BJ (cell line): ENCODE measurements at regions of chr2 and their contacts with region 1.

Region 1: DNA sequence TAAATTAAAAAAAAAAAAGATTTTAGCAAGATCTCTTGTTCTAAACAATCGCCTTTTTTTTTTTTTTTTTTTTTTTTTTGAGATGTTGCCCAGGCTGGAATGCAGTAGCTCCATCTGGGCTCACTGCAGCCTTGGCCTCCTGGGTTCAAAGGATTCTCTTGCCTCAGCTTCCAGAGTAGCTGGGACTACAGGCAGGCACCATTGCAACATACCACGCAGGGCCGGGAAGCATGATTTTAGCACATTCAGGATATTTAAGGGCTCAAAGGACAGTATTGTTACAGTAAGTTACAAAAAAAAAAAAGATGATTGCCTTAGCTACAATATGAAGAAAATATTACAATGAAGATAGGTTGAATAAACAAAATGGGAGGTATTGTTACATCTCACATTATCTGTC is 29.5 kb upstream of the SAP130 start:
- DNase-seq: no peak
- H3K4me3 ChIP-seq: no peak overlapping the region
- H3K27me3 ChIP-seq: no peaks in the 10 kb centered on the region
- CTCF ChIP-seq: no peak

Region 2: DNA sequence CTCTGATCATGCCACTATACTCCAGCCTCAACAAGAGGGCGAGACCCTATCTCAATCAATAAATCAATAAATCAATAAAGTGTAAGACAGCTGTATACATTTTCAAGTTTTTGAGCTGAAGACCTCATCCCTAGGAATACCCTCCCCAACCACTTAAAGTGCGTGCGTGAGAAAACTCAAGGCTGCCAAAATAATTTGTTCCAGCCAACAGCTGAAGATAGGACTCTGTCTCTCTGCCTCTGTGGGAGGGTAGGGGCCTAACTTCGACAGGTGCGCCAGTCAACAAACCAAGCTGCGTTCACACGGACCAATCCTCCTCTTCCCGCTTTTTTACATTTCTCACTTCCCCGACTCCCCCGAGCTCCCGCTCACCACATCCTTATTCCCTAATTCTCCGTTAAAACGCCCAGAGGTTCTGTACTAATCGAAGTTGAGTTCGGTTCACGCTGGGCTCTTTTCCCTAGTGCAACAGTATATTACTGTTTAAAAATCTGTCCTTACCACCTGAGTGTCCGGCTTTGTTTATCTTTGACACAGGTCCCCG is 200.0 kb before region 1 on chr2:
- CTCF ChIA-PET with region 1: no interaction called
- POLR2A ChIA-PET with region 1: no interaction called
- DNase-seq: no peak
- H3K4me3 ChIP-seq: peak overlapping the region; percentile 92
- H3K27me3 ChIP-seq: no peaks in the 10 kb centered on the region
- CTCF ChIP-seq: no peak

Region 3: DNA sequence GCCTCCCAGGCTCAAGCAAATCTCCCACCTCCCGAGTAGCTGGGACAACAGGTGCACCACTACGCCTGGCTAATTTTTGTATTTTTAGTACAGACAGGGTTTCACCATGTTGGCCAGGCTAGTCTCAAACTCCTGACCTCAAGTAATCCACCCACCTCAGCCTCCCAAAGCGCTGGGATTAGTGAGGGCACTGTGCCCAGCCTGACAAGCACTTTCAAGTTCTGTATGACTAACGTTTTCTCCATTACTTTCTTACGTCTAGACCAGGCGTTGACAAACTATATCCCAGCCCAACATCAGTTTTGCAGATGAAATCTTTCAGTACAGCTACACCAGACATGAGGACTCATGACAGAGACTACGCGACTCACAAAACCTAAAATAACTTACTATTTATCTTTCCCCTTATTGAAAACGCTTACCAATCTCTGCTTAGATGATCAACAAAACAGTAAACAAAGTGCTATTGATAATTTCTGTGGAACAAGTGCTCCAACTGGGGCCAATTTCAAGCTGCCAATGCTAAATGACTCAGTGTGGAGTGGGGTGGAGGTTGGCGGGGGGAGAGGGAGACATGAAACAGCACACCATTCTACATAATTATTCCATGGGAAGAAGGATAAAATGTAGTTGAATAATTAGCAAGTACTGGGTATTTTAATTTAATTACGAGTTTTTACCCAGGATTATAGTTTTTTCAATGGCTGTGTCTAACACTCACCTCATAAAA is 88.6 kb before region 1 on chr2:
- CTCF ChIA-PET with region 1: no interaction called
- POLR2A ChIA-PET with region 1: no interaction called
- DNase-seq: no peak
- H3K4me3 ChIP-seq: no peak overlapping the region
- H3K27me3 ChIP-seq: no peaks in the 10 kb centered on the region
- CTCF ChIP-seq: no peak

Region 4: GRCh38 chr2:128041561-128041960 is 15.8 kb before region 1 on chr2:
- CTCF ChIA-PET with region 1: no interaction called
- POLR2A ChIA-PET with region 1: interaction called, 10 read pairs
- DNase-seq: no peak
- H3K4me3 ChIP-seq: no peak overlapping the region
- H3K27me3 ChIP-seq: no peaks in the 10 kb centered on the region; the same call in 1 of the 2 replicates
- CTCF ChIP-seq: no peak

Region 5: DNA sequence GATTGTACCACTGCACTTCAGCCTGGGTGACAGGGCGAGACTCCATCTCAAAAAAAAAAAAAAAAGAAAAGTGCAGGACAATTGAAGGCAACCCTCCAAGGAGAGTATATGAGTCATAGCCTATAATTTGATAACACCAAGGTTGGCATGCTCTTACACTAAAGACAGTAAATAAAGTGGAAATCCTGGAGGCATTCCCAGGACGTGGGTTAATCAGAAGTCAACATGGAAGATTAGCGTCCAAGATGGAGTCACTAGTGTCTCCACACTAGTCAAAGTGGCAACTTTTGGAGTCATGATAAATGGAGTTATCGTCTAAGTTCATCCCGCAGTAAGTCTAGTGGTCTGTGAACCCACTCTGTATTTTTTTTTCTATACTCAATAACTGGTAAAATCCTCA is 12.4 kb after region 1 on chr2:
- CTCF ChIA-PET with region 1: interaction called, 22 read pairs
- POLR2A ChIA-PET with region 1: interaction called, 24 read pairs
- DNase-seq: no peak
- H3K4me3 ChIP-seq: no peak overlapping the region
- H3K27me3 ChIP-seq: no peaks in the 10 kb centered on the region
- CTCF ChIP-seq: no peak